ENCODE measurements at regions of chr6 and their contacts with region 1.

Region 1: DNA sequence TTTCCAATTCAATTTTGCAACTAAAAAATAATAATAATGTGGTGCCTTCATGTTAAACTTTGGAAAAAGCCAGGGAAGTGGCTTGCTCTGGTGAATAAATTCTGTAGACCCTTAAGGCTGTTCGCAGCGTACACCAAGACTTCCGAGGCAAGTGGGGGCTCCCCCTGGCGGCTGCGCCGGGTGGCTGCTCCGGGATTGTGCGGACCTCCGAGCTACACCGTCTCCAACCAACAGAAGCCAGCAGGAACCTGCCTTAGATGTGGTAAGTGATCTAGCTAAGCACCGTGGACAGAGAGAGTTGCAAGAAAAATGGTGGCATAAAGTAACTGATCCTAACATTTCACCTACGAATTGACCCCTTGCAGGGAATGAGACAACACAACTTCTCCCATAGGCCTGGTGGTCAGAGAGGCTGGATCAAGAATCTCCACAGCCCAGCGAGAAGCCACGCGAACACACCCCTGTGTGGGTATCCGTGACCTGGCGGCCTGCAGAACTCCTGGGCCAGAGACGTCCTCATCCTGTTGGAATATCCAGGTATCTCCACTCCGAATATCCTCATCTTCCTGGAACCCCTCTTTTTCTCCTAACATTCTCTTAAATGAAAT is 69.6 kb downstream of the TBXT start:
- DNase-seq: peak; percentile 85
- H3K4me3 ChIP-seq: peak overlapping the region; percentile 46
- H3K27ac ChIP-seq: peak overlapping the region; percentile 19
- H3K27me3 ChIP-seq: no peaks in the 10 kb centered on the region
- CTCF ChIP-seq: peak; percentile 99

Region 2: DNA sequence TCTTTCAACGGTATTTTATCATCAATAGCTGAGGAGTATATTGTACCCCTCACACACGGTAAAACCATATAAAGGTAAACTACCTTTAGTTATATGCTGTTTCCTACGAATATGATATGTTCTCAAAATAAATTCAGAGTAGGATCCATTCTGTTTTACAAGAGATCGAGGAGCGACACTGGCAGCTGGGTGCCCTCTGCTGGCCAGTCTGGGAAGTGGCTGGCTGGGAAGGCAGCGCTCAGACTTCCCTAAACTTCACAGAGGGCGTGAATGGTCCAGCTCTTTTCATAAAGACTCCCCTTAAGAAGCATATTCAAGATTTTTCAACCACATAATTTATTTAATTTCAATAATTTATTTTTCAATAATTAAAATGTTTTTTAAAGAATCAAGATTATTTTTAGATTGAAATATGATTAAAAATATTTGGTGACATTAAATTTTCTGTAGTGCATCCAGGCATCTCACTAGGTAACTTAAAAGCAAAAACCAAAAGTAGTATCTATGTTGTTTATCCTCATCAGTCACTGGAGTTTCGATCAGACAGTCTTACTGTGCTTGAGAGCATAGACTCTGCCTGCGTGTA is 247.5 kb before region 1 on chr6:
- in situ Hi-C with region 1: no loop called
- DNase-seq: peak; percentile 64
- H3K4me3 ChIP-seq: no peak overlapping the region
- H3K27ac ChIP-seq: no peak overlapping the region
- H3K27me3 ChIP-seq: peaks cover 17% of the 10 kb centered on the region
- CTCF ChIP-seq: peak; percentile 100

Region 3: GRCh38 chr6:165884813-165885765 is 212.9 kb before region 1 on chr6:
- in situ Hi-C with region 1: loop called (anchors 25 kb)
- DNase-seq: peak; percentile 70
- H3K4me3 ChIP-seq: no peak overlapping the region
- H3K27ac ChIP-seq: no peak overlapping the region
- H3K27me3 ChIP-seq: no peaks in the 10 kb centered on the region
- CTCF ChIP-seq: peak; percentile 97

Region 4: GRCh38 chr6:166615059-166615770 is 517.2 kb after region 1 on chr6:
- in situ Hi-C with region 1: no loop called
- DNase-seq: peak; percentile 27
- H3K4me3 ChIP-seq: no peak overlapping the region
- H3K27ac ChIP-seq: no peak overlapping the region
- H3K27me3 ChIP-seq: no peaks in the 10 kb centered on the region
- CTCF ChIP-seq: no peak